GM18951 (cell line): ENCODE measurements at regions of chr14 and their contacts with region 1.

Region 1: DNA sequence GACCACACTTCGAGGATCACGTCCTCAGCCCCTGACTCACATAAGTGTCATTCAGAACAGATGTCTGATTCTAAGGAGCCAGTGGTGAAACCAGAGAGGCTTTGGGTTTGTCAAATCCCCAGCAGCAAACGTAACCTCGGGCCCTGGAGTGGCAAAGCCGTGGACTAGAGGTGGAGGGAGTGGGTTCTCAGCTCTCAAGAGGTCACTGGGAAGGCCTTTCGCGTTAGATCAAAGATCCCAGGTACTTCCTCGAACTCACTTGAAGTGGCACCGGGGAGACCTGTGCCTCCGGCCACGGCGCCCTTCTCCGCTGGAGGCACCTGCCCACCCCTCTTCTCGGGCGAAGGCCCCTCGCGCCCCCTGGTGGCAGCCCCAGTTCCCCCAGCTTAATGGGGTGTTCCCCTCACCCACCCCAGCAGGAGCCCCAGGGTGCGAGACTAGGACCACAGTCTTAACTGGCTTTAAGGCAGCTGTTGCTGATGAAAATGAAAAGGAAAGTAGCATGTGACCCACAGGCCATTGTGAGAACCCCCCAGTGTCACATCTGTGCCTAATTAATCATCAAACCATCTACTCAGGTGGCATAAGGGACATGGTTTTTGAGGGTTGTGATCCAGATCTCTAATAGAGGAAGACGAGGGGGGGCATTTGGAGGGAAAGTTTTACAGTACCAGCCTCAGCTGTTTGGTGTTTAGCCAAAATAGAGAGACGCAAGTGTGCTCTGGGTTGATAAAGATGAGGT is 672 bp upstream of the ESR2 start:
- POLR2A ChIP-seq: no peak

Region 2: DNA sequence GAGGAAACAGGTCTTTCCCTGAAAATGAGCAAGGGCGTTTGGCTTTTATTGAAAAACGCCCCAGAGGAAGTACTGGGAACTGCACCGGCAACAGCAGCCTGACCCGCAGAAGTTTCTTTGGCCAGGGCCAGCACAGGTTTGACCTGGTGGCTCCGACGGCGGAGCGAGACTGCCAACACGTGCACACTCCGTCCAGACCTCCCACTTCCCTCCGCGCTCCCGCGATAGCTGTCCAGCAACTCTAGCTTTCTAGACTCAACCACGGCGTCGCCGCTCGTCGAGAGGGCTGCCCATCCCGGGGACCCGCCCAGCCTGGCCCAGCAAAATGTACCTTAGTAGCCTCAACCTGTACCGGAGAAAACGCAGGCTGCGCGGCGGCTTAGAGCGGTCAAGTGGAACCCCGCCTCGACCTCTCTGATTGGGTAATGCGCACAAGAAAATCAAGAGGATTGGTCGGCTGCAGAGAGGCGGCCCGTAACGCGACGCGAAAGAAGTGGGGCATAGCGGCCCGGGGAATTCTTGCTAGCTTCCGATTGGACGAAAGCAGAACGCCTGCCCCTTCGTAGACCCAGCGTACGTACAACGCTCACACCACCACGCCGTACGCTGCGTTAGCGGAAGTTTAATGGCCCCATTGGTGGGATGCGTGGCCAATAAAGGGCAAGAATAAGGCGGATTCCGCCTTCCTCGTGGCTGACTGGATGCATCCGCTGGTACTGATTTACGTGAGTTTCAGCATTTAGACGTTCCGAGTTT is 653.2 kb before region 1 on chr14 and contains the start of gene WDR89:
- in situ Hi-C with region 1: loop called (anchors 25 kb)
- POLR2A ChIP-seq: peak; percentile 90

Region 3: GRCh38 chr14:65403231-65403630 is 1108.4 kb after region 1 on chr14:
- in situ Hi-C with region 1: no loop called
- POLR2A ChIP-seq: no peak